Activated CD8-positive, alpha-beta T cell treated with anti-CD3 and anti-CD28 coated beads, Interleukin-2, amount 10 ng/mL, durations not matched to agents 7 days and 5 days (primary cell): ENCODE measurements at regions of chr6 and their contacts with region 1.

Region 1: DNA sequence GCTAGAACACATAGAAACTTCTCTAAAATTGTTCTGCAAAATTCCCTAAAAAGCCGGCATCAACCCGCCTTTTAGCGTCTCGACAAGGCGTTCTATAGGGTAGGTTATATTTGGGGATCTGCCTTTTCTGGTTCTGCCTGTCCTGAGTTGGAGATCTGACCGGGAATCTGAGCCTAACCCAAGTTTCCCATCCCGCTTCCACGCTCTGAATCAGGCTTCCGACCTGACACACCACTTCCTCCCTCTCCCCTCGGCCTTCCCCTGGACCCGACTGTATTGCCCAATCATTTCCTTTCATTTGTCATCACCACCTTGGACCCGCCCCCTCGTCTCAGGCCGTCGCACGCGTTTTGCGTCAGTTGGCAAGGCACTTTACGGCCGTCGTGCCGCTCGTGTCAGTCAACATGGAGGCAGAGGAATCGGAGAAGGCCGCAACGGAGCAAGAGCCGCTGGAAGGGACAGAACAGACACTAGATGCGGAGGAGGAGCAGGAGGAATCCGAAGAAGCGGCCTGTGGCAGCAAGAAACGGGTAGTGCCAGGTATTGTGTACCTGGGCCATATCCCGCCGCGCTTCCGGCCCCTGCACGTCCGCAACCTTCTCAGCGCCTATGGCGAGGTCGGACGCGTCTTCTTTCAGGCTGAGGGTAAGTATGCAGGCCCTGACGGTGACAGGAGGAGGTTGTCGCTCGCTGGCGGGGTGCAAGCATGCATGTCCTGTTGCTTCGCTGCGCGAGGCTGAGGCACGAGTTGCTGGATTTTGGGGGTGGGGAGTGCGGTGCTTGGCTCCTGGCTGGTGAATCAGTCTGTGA is at the start of gene ABT1:
- DNase-seq: peak; percentile 98
- ATAC-seq: peak; percentile 89
- H3K4me3 Mint-ChIP-seq: no peak within 1 kb of the TSS
- H3K27ac Mint-ChIP-seq: peak within 1 kb of the TSS; percentile 59
- H3K4me1 Mint-ChIP-seq: peaks cover 31% of the 10 kb centered on the region
- H3K27me3 Mint-ChIP-seq: peaks cover 18% of the 10 kb centered on the region
- total RNA-seq, gene ABT1: 25.0 to 25.3 TPM

Region 2: GRCh38 chr6:26087284-26088115 is 509.3 kb before region 1 on chr6 and contains the start of gene HFE:
- CTCF ChIA-PET with region 1: no interaction called
- POLR2A ChIA-PET with region 1: no interaction called
- DNase-seq: peak; percentile 50
- ATAC-seq: peak; percentile 48
- H3K4me3 Mint-ChIP-seq: peak within 1 kb of the TSS; percentile 80
- H3K27ac Mint-ChIP-seq: peak within 1 kb of the TSS; percentile 70
- H3K4me1 Mint-ChIP-seq: peaks cover 60% of the 10 kb centered on the region
- H3K27me3 Mint-ChIP-seq: peaks cover 1% of the 10 kb centered on the region
- total RNA-seq, gene HFE: 4.3 TPM

Region 3: GRCh38 chr6:26336355-26337198 is 260.2 kb before region 1 on chr6:
- CTCF ChIA-PET with region 1: interaction called, 58 read pairs
- POLR2A ChIA-PET with region 1: interaction called, 3 read pairs
- DNase-seq: no peak
- ATAC-seq: peak; percentile 45
- H3K4me3 Mint-ChIP-seq: peak overlapping the region; percentile 19
- H3K27ac Mint-ChIP-seq: peak overlapping the region; percentile 81
- H3K4me1 Mint-ChIP-seq: peaks cover 53% of the 10 kb centered on the region
- H3K27me3 Mint-ChIP-seq: peaks cover 7% of the 10 kb centered on the region